ENCODE measurements at regions of chr9 and their contacts with region 1.

Region 1: GRCh38 chr9:83937911-83938323 is 16.7 kb upstream of the KIF27 start:
- DNase-seq: peak in 1 of 3 donors; percentile 44
- ATAC-seq: peak; percentile 73
- H3K4me3 ChIP-seq: no peak overlapping the region
- H3K4me1 ChIP-seq: no peaks in the 10 kb centered on the region
- CTCF ChIP-seq: no peak

Region 2: GRCh38 chr9:84170521-84171141 is 232.7 kb after region 1 on chr9:
- intact Hi-C with region 1: loop called (anchors 5 to 10 kb)
- DNase-seq: peak; percentile 70 to 76 (median 76)
- ATAC-seq: peak; percentile 98
- H3K4me3 ChIP-seq: no peak overlapping the region
- H3K4me1 ChIP-seq: no peaks in the 10 kb centered on the region
- CTCF ChIP-seq: no peak

Region 3: DNA sequence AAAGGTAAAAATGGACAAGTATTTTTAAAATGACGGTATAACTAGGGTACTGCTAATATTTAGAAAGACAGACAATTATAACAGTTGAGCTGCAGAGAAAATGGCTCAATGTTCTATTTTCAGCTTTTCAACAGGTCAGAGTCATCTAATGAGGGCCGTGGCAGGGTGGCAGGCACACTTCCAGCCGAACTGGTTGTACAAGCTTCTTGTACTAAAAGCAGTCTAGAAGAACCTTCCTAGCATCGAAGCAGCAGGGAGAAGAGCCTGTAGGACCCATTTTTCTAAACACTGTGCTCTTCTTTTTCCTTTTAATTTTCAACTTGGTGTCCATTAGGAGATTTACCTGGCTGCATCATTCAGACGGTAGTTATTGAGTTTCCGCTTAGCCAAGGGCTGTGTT is 317.1 kb after region 1 on chr9:
- intact Hi-C with region 1: loop called (anchors 5 kb)
- DNase-seq: peak in 2 of 3 donors; percentile 44 to 62
- ATAC-seq: peak; percentile 35
- H3K4me3 ChIP-seq: no peak overlapping the region
- H3K4me1 ChIP-seq: no peaks in the 10 kb centered on the region
- CTCF ChIP-seq: no peak

Region 4: GRCh38 chr9:84261082-84261746 is 323.3 kb after region 1 on chr9:
- intact Hi-C with region 1: loop called (anchors 5 kb)
- DNase-seq: peak; percentile 76 to 93 (median 89)
- ATAC-seq: peak; percentile 94
- H3K4me3 ChIP-seq: no peak overlapping the region
- H3K4me1 ChIP-seq: no peaks in the 10 kb centered on the region
- CTCF ChIP-seq: peak; percentile 70

Measured in mucosa of descending colon (tissue), 3 donors.